Naive thymus-derived CD4-positive, alpha-beta T cell (primary cell): ENCODE measurements at regions of chr12 and their contacts with region 1.

Region 1: DNA sequence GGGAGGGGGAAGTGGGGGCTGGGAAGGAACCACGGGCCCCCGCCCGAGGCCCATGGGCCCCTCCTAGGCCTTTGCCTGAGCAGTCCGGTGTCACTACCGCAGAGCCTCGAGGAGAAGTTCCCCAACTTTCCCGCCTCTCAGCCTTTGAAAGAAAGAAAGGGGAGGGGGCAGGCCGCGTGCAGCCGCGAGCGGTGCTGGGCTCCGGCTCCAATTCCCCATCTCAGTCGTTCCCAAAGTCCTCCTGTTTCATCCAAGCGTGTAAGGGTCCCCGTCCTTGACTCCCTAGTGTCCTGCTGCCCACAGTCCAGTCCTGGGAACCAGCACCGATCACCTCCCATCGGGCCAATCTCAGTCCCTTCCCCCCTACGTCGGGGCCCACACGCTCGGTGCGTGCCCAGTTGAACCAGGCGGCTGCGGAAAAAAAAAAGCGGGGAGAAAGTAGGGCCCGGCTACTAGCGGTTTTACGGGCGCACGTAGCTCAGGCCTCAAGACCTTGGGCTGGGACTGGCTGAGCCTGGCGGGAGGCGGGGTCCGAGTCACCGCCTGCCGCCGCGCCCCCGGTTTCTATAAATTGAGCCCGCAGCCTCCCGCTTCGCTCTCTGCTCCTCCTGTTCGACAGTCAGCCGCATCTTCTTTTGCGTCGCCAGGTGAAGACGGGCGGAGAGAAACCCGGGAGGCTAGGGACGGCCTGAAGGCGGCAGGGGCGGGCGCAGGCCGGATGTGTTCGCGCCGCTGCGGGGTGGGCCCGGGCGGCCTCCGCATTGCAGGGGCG is at the start of gene GAPDH:
- DNase-seq: peak; percentile 66 to 94 (median 83)
- ATAC-seq: peak; percentile 66
- H3K4me3 ChIP-seq: peak within 1 kb of the TSS; percentile 97
- H3K4me3 Mint-ChIP-seq: peak within 1 kb of the TSS; percentile 90 to 99 (median 94)
- H3K27ac ChIP-seq: peak within 1 kb of the TSS; percentile 81
- H3K27ac Mint-ChIP-seq: peak within 1 kb of the TSS; percentile 92 to 100 (median 94)
- H3K4me1 ChIP-seq: peaks cover 31 to 43% of the 10 kb centered on the region in 2 donors
- H3K4me1 Mint-ChIP-seq: peaks cover 28 to 59% (median 42%) of the 10 kb centered on the region in 7 donors
- H3K27me3 ChIP-seq: no peaks in the 10 kb centered on the region
- H3K27me3 Mint-ChIP-seq: peaks cover 0 to 2% (median 0%) of the 10 kb centered on the region in 5 donors
- total RNA-seq, gene GAPDH: 330 to 4,503 (median 379) TPM

Region 2: GRCh38 chr12:6443361-6443983 is 90.6 kb before region 1 on chr12:
- CTCF ChIA-PET with region 1: interaction called, 6 read pairs
- POLR2A ChIA-PET with region 1: interaction called, 18 read pairs
- intact Hi-C with region 1: no loop called
- DNase-seq: no peak
- ATAC-seq: no peak
- H3K4me3 ChIP-seq: peak overlapping the region; percentile 19
- H3K4me3 Mint-ChIP-seq: peak overlapping the region; percentile 95 to 100 (median 100)
- H3K27ac ChIP-seq: peak overlapping the region; percentile 87
- H3K27ac Mint-ChIP-seq: peak overlapping the region; percentile 92 to 100 (median 95)
- H3K4me1 ChIP-seq: peaks cover 25 to 32% of the 10 kb centered on the region in 2 donors
- H3K4me1 Mint-ChIP-seq: peaks cover 22 to 63% (median 53%) of the 10 kb centered on the region in 7 donors
- H3K27me3 ChIP-seq: no peaks in the 10 kb centered on the region
- H3K27me3 Mint-ChIP-seq: no peaks in the 10 kb centered on the region

Region 3: DNA sequence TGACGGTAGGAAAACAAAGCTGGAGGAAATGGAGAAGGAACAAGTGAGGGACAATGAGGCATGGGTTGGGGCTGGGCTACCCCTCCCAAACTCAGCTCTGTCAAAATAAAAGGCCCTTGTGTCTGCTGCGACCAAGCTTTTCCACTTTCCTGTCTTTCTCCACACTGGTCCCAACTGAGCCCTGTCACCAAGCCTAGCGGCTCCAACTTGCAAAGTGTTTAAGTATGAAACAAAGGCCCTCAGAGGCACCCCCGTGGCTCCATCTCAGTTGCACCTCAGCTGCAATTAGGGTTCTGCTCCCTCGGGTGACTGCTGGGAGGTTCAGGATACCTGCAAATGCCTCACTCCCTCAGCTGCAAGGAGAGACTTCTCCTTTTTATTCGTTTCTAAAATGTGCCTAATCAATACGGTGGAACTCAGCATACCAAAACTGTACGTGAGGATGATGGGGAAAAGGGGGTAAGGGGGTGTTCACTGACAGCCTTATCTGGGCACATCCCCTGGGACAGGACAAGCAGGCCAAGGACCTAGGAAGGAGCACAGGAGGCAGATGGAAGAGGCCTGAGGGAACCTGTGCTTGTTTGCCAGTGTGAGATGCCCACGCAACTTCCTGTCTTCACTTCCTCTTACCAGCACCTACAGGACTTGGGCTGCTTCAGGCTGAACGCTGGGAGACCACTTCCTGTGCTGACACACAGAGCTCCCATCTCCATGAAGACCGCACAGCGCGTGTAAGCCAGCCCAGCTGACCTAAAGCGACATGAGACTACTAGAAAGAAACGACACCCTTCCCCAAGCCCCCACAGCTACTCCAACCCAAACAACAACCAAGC is 72.5 kb before region 1 on chr12:
- CTCF ChIA-PET with region 1: interaction called, 12 read pairs
- POLR2A ChIA-PET with region 1: interaction called, 19 read pairs
- intact Hi-C with region 1: loop called in 1 of 2 experiments (anchors 1 kb)
- DNase-seq: peak; percentile 41 to 91 (median 87)
- ATAC-seq: peak; percentile 93
- H3K4me3 ChIP-seq: peak overlapping the region; percentile 54
- H3K4me3 Mint-ChIP-seq: peak overlapping the region; percentile 74 to 89 (median 85)
- H3K27ac ChIP-seq: peak overlapping the region; percentile 93
- H3K27ac Mint-ChIP-seq: peak overlapping the region; percentile 95 to 99 (median 98)
- H3K4me1 ChIP-seq: peaks cover 59 to 81% of the 10 kb centered on the region in 2 donors
- H3K4me1 Mint-ChIP-seq: peaks cover 66 to 95% (median 87%) of the 10 kb centered on the region in 7 donors
- H3K27me3 ChIP-seq: no peaks in the 10 kb centered on the region
- H3K27me3 Mint-ChIP-seq: no peaks in the 10 kb centered on the region

Region 4: DNA sequence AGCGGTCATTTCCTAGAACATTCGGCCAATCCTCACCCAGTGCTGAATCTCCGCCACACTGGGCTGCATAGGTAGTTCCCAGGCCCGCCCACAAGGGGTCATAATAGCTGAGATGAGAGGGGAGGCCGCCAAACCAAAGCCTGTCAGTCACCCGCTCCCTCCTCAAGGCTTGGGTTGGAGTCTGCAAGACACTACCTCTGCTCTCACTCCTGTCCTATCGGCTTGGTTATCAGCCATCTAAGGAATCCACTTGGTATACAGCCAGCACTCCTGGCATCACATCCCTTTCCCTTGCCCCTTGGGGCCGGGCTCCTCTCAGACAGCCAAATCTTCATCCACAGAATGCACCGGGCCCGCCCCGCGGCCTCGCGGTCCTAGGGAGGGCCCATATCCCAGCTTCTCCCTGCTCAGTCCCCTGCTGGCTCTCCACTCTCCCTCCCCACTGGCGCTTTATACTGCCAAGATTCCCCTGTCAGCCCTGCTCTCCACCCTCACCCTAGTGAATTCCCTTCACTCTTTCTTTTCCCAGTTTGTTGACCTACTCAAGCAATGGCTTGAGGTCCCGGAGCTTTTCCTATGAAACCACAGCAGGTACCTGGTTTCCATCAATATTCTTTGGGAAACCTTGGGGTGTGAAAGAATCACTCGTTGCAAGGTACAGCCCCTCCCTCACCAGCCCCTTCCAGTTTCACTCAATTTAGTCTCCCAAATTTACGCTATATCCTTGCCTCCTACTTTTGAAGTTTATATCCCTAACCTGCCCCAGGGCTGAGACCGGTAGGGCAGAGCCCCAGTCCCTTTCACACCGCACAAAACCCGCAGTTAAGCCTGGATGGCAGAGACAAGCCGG is 20.3 kb after region 1 on chr12:
- CTCF ChIA-PET with region 1: interaction called, 12 read pairs
- POLR2A ChIA-PET with region 1: interaction called, 8 read pairs
- intact Hi-C with region 1: loop called (anchors 1 kb)
- DNase-seq: peak; percentile 38 to 57 (median 52)
- ATAC-seq: peak; percentile 67
- H3K4me3 ChIP-seq: peak overlapping the region; percentile 92
- H3K4me3 Mint-ChIP-seq: peak overlapping the region; percentile 80 to 96 (median 90)
- H3K27ac ChIP-seq: peak overlapping the region; percentile 71
- H3K27ac Mint-ChIP-seq: peak overlapping the region; percentile 14 to 88 (median 55)
- H3K4me1 ChIP-seq: peaks cover 26 to 29% of the 10 kb centered on the region in 2 donors
- H3K4me1 Mint-ChIP-seq: peaks cover 39 to 62% (median 56%) of the 10 kb centered on the region in 7 donors
- H3K27me3 ChIP-seq: no peaks in the 10 kb centered on the region
- H3K27me3 Mint-ChIP-seq: no peaks in the 10 kb centered on the region

Region 5: DNA sequence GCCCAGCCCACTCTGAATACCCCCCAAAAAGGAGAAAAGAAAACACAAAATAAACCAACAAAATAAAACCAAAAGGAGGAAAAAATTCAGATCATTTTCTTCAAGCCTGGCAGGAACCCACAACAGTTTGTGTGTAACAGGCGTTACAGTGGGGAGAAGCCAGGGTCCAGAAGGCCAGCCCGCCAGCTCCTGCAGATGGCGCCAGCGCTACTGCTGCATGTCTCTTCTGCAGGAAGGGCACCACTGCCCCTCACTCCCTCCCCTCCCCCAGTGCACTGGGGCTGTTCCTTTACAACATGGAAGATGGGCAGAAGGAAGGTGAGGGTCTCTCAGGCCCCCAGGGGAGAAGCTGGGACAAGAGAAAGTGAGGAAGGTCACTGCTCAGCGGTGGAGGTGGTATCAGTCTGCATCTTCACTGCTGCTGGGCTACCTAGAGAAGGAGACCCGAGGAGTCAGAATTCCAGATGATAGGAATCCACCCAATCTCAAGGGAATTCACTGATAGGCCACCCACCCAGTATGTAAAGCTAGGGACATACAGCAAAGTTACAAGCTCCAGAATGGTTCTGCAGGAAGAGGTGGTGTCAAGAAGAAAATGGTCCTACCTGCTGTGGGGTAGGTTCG is 36.3 kb after region 1 on chr12:
- CTCF ChIA-PET with region 1: interaction called, 4 read pairs
- POLR2A ChIA-PET with region 1: no interaction called
- intact Hi-C with region 1: loop called (anchors 1 to 2 kb)
- DNase-seq: peak in 1 of 9 donors; percentile 51
- ATAC-seq: no peak
- H3K4me3 ChIP-seq: no peak overlapping the region
- H3K4me3 Mint-ChIP-seq: peak overlapping the region in 7 of 10 donors; percentile 36 to 100 (median 94)
- H3K27ac ChIP-seq: no peak overlapping the region
- H3K27ac Mint-ChIP-seq: peak overlapping the region; percentile 47 to 99 (median 86)
- H3K4me1 ChIP-seq: peaks cover 8 to 18% of the 10 kb centered on the region in 2 donors
- H3K4me1 Mint-ChIP-seq: peaks cover 17 to 49% (median 44%) of the 10 kb centered on the region in 7 donors
- H3K27me3 ChIP-seq: no peaks in the 10 kb centered on the region
- H3K27me3 Mint-ChIP-seq: no peaks in the 10 kb centered on the region

Region 6: DNA sequence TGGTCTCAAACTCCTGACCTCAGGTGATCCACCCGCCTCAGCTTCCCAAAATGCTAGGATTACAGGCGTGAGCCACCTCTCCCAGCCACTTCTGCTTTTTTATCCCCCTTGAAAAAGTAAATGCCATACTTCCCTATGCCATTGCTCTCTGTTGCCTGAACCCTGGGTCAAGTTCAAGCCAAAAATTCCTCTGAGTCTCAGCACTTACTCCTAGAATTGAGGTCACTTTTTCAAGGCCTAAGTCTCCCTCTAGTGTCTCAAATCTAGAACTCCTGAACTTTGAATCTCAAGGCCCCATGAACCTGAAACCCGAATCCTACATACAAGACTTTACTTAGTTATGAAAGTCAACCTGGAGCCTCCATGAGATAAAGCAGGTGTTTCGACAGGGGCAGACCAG is 1133.0 kb after region 1 on chr12:
- CTCF ChIA-PET with region 1: no interaction called
- POLR2A ChIA-PET with region 1: no interaction called
- intact Hi-C with region 1: no loop called
- DNase-seq: no peak
- ATAC-seq: no peak
- H3K4me3 ChIP-seq: no peak overlapping the region
- H3K4me3 Mint-ChIP-seq: no peak overlapping the region
- H3K27ac ChIP-seq: no peak overlapping the region
- H3K27ac Mint-ChIP-seq: no peak overlapping the region
- H3K4me1 ChIP-seq: no peaks in the 10 kb centered on the region
- H3K4me1 Mint-ChIP-seq: peaks cover 0 to 1% (median 0%) of the 10 kb centered on the region in 7 donors
- H3K27me3 ChIP-seq: no peaks in the 10 kb centered on the region
- H3K27me3 Mint-ChIP-seq: no peaks in the 10 kb centered on the region